ENCODE measurements at regions of chr10 and their contacts with region 1.

Region 1: DNA sequence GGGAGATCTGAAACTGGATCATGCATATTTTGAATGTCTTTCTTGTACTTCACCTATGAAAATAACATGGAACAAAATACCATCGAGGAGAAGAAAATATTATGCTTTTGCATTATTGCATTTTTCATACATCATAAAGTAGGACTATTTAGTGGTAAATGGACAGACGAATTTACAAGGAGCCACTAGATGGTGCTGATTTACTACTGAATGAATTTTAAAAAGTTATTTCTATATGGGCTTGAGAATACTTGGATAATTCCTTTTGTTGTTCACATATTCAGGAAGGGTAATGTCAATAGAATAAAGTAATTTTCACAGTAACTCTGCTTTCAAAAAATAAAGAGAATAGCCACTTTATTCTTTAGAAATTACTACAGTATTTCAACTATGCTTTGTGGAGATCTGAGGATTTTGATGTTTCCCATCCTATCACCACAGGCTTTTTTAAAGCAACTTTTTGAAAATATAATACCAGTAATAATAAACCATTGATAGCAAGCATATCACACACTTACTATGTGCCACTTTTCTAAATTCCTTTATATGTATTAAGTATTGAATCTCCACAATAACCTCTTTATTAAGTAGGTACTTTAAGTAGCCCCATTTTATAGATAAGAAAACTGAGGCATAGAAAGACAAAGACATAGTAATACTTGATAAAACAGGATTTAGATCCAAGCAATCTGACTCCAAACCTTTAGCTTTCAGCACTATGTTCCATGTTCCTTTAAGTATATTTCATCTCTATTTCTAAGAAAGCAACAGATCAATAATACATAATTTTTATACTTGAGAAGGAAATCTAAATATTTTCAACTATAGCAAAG is 38.6 kb downstream of the NEBL start:
- DNase-seq: peak; percentile 22
- ATAC-seq: peak; percentile 64
- H3K4me3 ChIP-seq: no peak overlapping the region
- H3K27ac ChIP-seq: no peak overlapping the region
- H3K4me1 ChIP-seq: no peaks in the 10 kb centered on the region
- H3K27me3 ChIP-seq: no peaks in the 10 kb centered on the region
- CTCF ChIP-seq: peak; percentile 56
- POLR2A ChIP-seq: no peak
- RAD21 ChIP-seq: peak; percentile 61

Region 2: DNA sequence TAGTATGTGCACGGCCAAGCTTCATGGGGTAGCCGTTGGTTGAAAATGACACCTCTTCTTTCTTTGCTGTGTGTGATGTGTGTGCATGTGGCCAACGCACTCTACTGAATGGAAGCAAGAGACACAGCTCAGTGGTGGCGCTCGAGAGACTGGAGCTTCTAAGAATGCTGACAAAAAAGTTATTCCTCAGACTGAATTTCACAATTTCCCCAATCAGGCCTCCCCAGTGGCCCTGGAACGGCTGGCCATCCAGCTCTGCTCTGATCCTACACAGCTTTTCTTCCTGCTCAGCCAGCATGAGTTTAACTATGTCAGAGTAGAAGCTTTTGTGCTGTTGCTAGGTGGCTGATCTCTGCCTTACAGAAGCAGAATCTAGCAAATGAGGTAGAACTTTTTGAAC is 1228.9 kb before region 1 on chr10:
- CTCF ChIA-PET with region 1: no interaction called
- POLR2A ChIA-PET with region 1: no interaction called
- dilution Hi-C with region 1: no loop called
- in situ Hi-C with region 1: no loop called
- intact Hi-C with region 1: loop called (anchors 10 kb)
- DNase-seq: peak; percentile 67
- ATAC-seq: peak; percentile 97
- H3K4me3 ChIP-seq: no peak overlapping the region
- H3K27ac ChIP-seq: no peak overlapping the region
- H3K4me1 ChIP-seq: peaks cover 5% of the 10 kb centered on the region
- H3K27me3 ChIP-seq: no peaks in the 10 kb centered on the region
- CTCF ChIP-seq: peak; percentile 39
- POLR2A ChIP-seq: no peak
- RAD21 ChIP-seq: no peak

Region 3: DNA sequence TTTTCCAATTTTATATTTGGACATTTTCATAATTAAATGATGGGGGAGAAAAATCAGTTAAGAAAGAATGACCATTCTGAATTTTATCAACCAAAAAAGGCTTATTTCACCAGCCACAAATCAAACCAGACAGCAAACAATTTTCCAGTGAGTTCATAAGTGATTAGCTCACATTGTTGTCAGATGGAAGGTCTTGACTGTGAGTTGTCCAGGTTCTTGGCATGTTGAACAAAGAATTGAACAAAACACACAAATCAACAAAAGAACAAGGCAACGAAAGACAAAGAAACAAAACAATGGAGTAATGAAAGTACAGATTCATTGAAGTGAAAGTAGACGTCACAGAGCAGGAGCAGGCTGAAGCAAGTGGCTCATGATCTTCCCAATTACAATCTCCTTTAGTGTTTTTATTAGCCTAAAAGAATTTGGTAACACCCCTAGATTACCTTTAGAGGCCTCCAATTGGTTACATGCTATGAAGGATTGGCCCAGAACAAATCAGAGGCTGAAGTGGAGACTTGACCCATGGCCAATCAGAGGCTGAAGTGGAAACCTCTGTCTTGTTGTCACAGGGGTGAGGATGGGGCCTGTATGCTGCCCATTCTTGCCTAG is 210.1 kb before region 1 on chr10:
- CTCF ChIA-PET with region 1: no interaction called
- POLR2A ChIA-PET with region 1: no interaction called
- dilution Hi-C with region 1: no loop called
- in situ Hi-C with region 1: no loop called
- intact Hi-C with region 1: no loop called
- DNase-seq: no peak
- ATAC-seq: no peak
- H3K4me3 ChIP-seq: no peak overlapping the region
- H3K27ac ChIP-seq: no peak overlapping the region
- H3K4me1 ChIP-seq: no peaks in the 10 kb centered on the region
- H3K27me3 ChIP-seq: no peaks in the 10 kb centered on the region
- CTCF ChIP-seq: no peak
- POLR2A ChIP-seq: no peak
- RAD21 ChIP-seq: no peak

Region 4: GRCh38 chr10:20885678-20886077 is 27.2 kb after region 1 on chr10:
- CTCF ChIA-PET with region 1: no interaction called
- POLR2A ChIA-PET with region 1: interaction called, 10 read pairs
- dilution Hi-C with region 1: no loop called
- in situ Hi-C with region 1: no loop called
- intact Hi-C with region 1: no loop called
- DNase-seq: no peak
- ATAC-seq: no peak
- H3K4me3 ChIP-seq: no peak overlapping the region
- H3K27ac ChIP-seq: no peak overlapping the region
- H3K4me1 ChIP-seq: no peaks in the 10 kb centered on the region
- H3K27me3 ChIP-seq: no peaks in the 10 kb centered on the region
- CTCF ChIP-seq: no peak
- POLR2A ChIP-seq: no peak
- RAD21 ChIP-seq: no peak

Region 5: DNA sequence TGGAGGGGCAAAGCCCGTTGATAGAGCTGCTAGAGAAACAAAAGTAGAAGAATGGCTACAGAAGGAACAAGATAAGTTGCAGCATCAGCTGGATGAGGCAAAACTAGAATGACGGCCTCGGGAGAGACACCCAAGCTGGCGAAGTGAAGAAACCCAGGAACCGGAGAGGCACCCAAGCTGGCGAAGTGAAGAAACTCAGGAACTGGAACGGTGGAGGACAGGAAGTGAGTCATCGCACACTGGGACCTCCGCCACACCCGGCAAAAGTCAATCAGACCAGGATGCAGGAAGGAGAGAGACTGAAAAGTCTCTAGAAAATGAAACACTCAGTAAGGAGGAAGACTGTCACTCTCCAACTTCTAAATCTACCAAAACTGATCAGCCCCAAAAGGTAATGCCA is 171.6 kb after region 1 on chr10:
- CTCF ChIA-PET with region 1: no interaction called
- POLR2A ChIA-PET with region 1: no interaction called
- dilution Hi-C with region 1: no loop called
- in situ Hi-C with region 1: no loop called
- intact Hi-C with region 1: no loop called
- DNase-seq: no peak
- ATAC-seq: no peak
- H3K4me3 ChIP-seq: no peak overlapping the region
- H3K27ac ChIP-seq: no peak overlapping the region
- H3K4me1 ChIP-seq: no peaks in the 10 kb centered on the region
- H3K27me3 ChIP-seq: no peaks in the 10 kb centered on the region
- CTCF ChIP-seq: no peak
- POLR2A ChIP-seq: no peak
- RAD21 ChIP-seq: no peak

Region 6: GRCh38 chr10:21257926-21258325 is 399.4 kb after region 1 on chr10:
- CTCF ChIA-PET with region 1: no interaction called
- POLR2A ChIA-PET with region 1: no interaction called
- dilution Hi-C with region 1: no loop called
- in situ Hi-C with region 1: loop called (anchors 10 kb)
- intact Hi-C with region 1: no loop called
- DNase-seq: peak; percentile 25
- ATAC-seq: no peak
- H3K4me3 ChIP-seq: no peak overlapping the region
- H3K27ac ChIP-seq: no peak overlapping the region
- H3K4me1 ChIP-seq: no peaks in the 10 kb centered on the region
- H3K27me3 ChIP-seq: peaks cover 4% of the 10 kb centered on the region
- CTCF ChIP-seq: no peak
- POLR2A ChIP-seq: no peak
- RAD21 ChIP-seq: no peak

Region 7: GRCh38 chr10:21732067-21732772 is 873.7 kb after region 1 on chr10:
- CTCF ChIA-PET with region 1: no interaction called
- POLR2A ChIA-PET with region 1: no interaction called
- dilution Hi-C with region 1: no loop called
- in situ Hi-C with region 1: no loop called
- intact Hi-C with region 1: no loop called
- DNase-seq: peak; percentile 82
- ATAC-seq: peak; percentile 95
- H3K4me3 ChIP-seq: no peak overlapping the region
- H3K27ac ChIP-seq: no peak overlapping the region
- H3K4me1 ChIP-seq: peaks cover 4% of the 10 kb centered on the region
- H3K27me3 ChIP-seq: no peaks in the 10 kb centered on the region
- CTCF ChIP-seq: peak; percentile 93
- POLR2A ChIP-seq: no peak
- RAD21 ChIP-seq: peak; percentile 93

Region 8: GRCh38 chr10:21978191-21978862 is 1119.8 kb after region 1 on chr10:
- CTCF ChIA-PET with region 1: no interaction called
- POLR2A ChIA-PET with region 1: no interaction called
- dilution Hi-C with region 1: no loop called
- in situ Hi-C with region 1: no loop called
- intact Hi-C with region 1: loop called (anchors 10 kb)
- DNase-seq: peak; percentile 81
- ATAC-seq: peak; percentile 80
- H3K4me3 ChIP-seq: no peak overlapping the region
- H3K27ac ChIP-seq: no peak overlapping the region
- H3K4me1 ChIP-seq: peaks cover 2% of the 10 kb centered on the region; the same call in 1 of the 2 replicates
- H3K27me3 ChIP-seq: no peaks in the 10 kb centered on the region
- CTCF ChIP-seq: no peak
- POLR2A ChIP-seq: no peak
- RAD21 ChIP-seq: no peak